ENCODE measurements at regions of chr15 and their contacts with region 1.

Region 1: GRCh38 chr15:37764733-37765191 is 169.7 kb upstream of the TMCO5A start:
- DNase-seq: no peak
- H3K4me3 Mint-ChIP-seq: no peak overlapping the region
- H3K27ac Mint-ChIP-seq: no peak overlapping the region
- H3K4me1 Mint-ChIP-seq: peaks cover 3% of the 10 kb centered on the region
- H3K27me3 Mint-ChIP-seq: no peaks in the 10 kb centered on the region

Region 2: DNA sequence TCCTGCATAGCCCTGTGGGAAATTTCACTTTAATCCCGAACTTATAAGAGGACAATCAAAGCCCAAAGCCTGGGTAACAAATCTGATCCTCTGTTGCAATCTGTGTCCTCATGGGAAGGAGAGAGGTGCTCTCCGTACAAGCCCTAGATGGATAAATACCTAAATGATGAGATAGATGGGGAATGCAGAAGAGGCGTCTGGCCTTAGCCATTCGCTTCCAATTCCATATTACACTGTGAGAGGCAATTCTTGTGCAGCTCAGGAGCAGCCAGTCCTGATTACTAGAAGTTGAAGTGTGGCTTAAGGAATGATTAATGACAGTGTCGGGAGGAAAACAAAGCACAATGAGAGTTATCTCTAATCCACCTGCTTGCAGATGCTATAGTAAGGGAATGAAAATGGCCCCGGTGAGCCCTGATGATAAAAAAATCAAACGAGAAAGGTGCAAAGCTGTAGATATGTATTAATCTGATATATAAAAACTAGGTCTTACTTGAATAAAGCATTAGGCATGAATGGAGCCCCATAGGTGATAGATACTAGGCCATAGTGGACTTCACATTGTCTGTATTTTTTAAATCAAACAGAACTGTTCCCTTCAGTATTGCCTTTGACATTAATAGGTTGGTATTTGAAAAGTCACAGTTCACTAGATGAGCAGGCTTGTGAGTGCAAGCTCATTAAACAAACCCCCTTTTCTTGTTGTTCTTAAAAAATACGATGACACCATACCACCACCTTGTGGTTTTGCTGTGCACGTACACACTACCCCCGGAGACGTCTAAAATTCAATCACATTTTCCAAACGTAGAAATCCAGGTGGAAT is 115.5 kb after region 1 on chr15:
- intact Hi-C with region 1: loop called (anchors 10 kb)
- DNase-seq: no peak
- H3K4me3 Mint-ChIP-seq: no peak overlapping the region
- H3K27ac Mint-ChIP-seq: no peak overlapping the region
- H3K4me1 Mint-ChIP-seq: no peaks in the 10 kb centered on the region
- H3K27me3 Mint-ChIP-seq: no peaks in the 10 kb centered on the region